ENCODE measurements at regions of chr20 and their contacts with region 1.

Region 1: GRCh38 chr20:3677733-3678132 is 4.1 kb downstream of the ADAM33 start:
- DNase-seq: no peak
- H3K4me3 Mint-ChIP-seq: no peak overlapping the region
- H3K27ac Mint-ChIP-seq: no peak overlapping the region
- H3K4me1 Mint-ChIP-seq: peaks cover 9% of the 10 kb centered on the region
- H3K27me3 Mint-ChIP-seq: peaks cover 98% of the 10 kb centered on the region

Region 2: GRCh38 chr20:3667434-3668037 is 10.2 kb before region 1 on chr20:
- CTCF ChIA-PET with region 1: interaction called, 12 read pairs
- DNase-seq: no peak
- H3K4me3 Mint-ChIP-seq: no peak overlapping the region
- H3K27ac Mint-ChIP-seq: peak overlapping the region; percentile 49
- H3K4me1 Mint-ChIP-seq: peaks cover 32% of the 10 kb centered on the region
- H3K27me3 Mint-ChIP-seq: peaks cover 98% of the 10 kb centered on the region